AG04450 (cell line): ENCODE measurements at regions of chr6 and their contacts with region 1.

Region 1: DNA sequence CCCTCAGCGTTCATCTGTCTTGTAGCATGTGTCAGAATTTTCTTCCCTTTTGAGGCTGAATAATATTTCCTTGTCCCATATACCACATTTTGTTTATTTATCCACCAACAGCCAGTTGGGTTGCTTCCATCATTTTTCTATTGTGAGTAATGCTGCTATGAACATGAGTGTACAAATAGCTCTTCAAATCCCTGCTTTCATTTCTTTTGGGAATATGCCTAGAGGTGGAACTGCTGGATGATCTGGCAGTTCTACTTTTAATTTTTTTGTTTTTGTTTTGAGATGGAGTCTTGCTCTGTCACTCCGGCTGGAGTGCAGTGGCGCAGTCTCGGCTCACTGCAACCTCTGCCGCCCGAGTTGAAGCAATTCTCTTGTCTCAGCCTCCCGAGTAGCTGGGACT is 64.7 kb downstream of the SASH1 start:
- DNase-seq: peak; percentile 84
- H3K4me3 ChIP-seq: no peak overlapping the region
- H3K27ac ChIP-seq: peak overlapping the region; percentile 68
- H3K27me3 ChIP-seq: no peaks in the 10 kb centered on the region
- CTCF ChIP-seq: no peak

Region 2: GRCh38 chr6:147285087-147285855 is 1122.1 kb before region 1 on chr6:
- CTCF ChIA-PET with region 1: interaction called, 11 read pairs
- POLR2A ChIA-PET with region 1: no interaction called
- DNase-seq: no peak
- H3K4me3 ChIP-seq: no peak overlapping the region
- H3K27ac ChIP-seq: no peak overlapping the region
- H3K27me3 ChIP-seq: no peaks in the 10 kb centered on the region
- CTCF ChIP-seq: peak; percentile 50

Region 3: GRCh38 chr6:148440877-148441453 is 33.6 kb after region 1 on chr6:
- CTCF ChIA-PET with region 1: interaction called, 3 read pairs
- POLR2A ChIA-PET with region 1: interaction called, 12 read pairs
- DNase-seq: peak; percentile 72
- H3K4me3 ChIP-seq: no peak overlapping the region
- H3K27ac ChIP-seq: peak overlapping the region; percentile 92
- H3K27me3 ChIP-seq: no peaks in the 10 kb centered on the region
- CTCF ChIP-seq: no peak

Region 4: DNA sequence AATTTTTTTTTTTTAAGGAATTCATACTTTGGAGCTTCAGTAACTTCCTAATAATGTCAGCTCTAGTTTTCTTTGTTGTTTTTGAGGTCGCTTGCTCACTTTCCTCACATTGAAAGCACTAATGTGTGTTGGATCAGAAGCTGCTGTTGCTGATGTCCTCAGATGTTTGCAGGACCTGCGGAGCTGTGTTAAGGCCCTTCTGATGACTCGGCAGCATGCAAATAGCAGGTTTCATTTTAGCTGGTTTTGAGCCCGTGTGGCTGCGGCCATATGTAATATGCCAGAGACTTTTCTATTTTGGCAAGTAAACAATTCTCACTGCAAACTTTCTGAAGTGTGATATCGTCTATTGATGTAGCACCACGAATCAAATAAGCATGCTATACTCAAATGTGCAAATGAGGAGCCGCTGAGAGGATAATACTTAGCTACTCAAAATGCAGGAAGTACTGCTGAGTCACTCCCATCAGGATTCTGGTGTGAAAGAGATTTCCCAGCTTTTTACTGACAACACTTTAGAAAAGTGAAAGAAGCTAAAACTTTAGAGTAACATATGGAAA is 123.1 kb after region 1 on chr6:
- CTCF ChIA-PET with region 1: no interaction called
- POLR2A ChIA-PET with region 1: interaction called, 10 read pairs
- DNase-seq: peak; percentile 93
- H3K4me3 ChIP-seq: peak overlapping the region; percentile 39
- H3K27ac ChIP-seq: peak overlapping the region; percentile 97
- H3K27me3 ChIP-seq: no peaks in the 10 kb centered on the region
- CTCF ChIP-seq: no peak